K562 (cell line): ENCODE measurements at regions of chr7 and their contacts with region 1.

Region 1: GRCh38 chr7:117750612-117751563 is 122.4 kb downstream of the CTTNBP2 start:
- DNase-seq: peak; percentile 34 to 37 (median 36)
- ATAC-seq: peak; percentile 65; the same call in 1 of the 3 replicates
- H3K4me3 ChIP-seq: no peak overlapping the region
- H3K27ac ChIP-seq: no peak overlapping the region
- H3K4me1 ChIP-seq: no peaks in the 10 kb centered on the region
- H3K27me3 ChIP-seq: no peaks in the 10 kb centered on the region
- CTCF ChIP-seq: peak; percentile 38 to 67 (median 45); a peak in 4 of 6 replicates
- EP300 ChIP-seq: no peak
- POLR2A ChIP-seq: no peak
- RAD21 ChIP-seq: peak; percentile 79 to 83

Region 2: GRCh38 chr7:117791877-117792780 is 41.2 kb after region 1 on chr7:
- CTCF ChIA-PET with region 1: no interaction called
- POLR2A ChIA-PET with region 1: no interaction called
- in situ Hi-C with region 1: no loop called
- intact Hi-C with region 1: loop called (anchors 2 kb)
- DNase-seq: peak; percentile 44 to 90 (median 63)
- ATAC-seq: peak; percentile 91
- H3K4me3 ChIP-seq: peak overlapping the region; percentile 1; the same call in 1 of the 2 replicates
- H3K27ac ChIP-seq: peak overlapping the region; percentile 74
- H3K4me1 ChIP-seq: peaks cover 15 to 35% of the 10 kb centered on the region in 2 experiments; a peak in 4 of 5 replicates
- H3K27me3 ChIP-seq: no peaks in the 10 kb centered on the region
- CTCF ChIP-seq: peak; percentile 59 to 74 (median 59); a peak in 5 of 6 replicates
- EP300 ChIP-seq: peak; percentile 98
- POLR2A ChIP-seq: no peak
- RAD21 ChIP-seq: peak; percentile 33 to 47; a peak in 3 of 4 replicates

Region 3: DNA sequence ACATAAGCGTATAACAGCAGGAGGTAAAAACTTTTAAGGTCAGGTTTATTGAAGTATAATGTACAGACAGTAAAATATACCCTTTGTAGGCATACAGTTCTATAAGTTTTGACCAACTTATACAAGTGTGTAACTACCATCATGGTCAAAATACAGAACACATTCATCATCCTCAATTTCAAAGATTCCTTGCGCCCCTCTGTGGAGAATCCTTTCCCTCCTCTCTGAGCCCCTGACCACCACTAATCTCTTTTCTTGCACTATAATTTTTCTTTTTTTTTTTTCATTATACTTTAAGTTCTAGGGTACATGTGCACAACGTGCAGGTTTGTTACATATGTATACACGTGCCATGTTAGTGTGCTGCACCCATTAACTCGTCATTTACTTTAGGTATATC is 180.4 kb after region 1 on chr7:
- CTCF ChIA-PET with region 1: no interaction called
- POLR2A ChIA-PET with region 1: no interaction called
- in situ Hi-C with region 1: no loop called
- intact Hi-C with region 1: loop called (anchors 5 kb)
- DNase-seq: no peak
- ATAC-seq: peak; percentile 48; the same call in 2 of the 3 replicates
- H3K4me3 ChIP-seq: no peak overlapping the region
- H3K27ac ChIP-seq: no peak overlapping the region
- H3K4me1 ChIP-seq: no peaks in the 10 kb centered on the region
- H3K27me3 ChIP-seq: no peaks in the 10 kb centered on the region
- CTCF ChIP-seq: peak in 1 of 3 experiments; percentile 38; a peak in 2 of 6 replicates
- EP300 ChIP-seq: no peak
- POLR2A ChIP-seq: no peak
- RAD21 ChIP-seq: peak; percentile 14 to 34; a peak in 1 of 4 replicates

Region 4: GRCh38 chr7:118104812-118105441 is 354.0 kb after region 1 on chr7:
- CTCF ChIA-PET with region 1: no interaction called
- POLR2A ChIA-PET with region 1: no interaction called
- in situ Hi-C with region 1: no loop called
- intact Hi-C with region 1: loop called (anchors 10 kb)
- DNase-seq: peak in 2 of 4 experiments; percentile 12 to 13
- ATAC-seq: peak; percentile 73
- H3K4me3 ChIP-seq: no peak overlapping the region
- H3K27ac ChIP-seq: no peak overlapping the region
- H3K4me1 ChIP-seq: no peaks in the 10 kb centered on the region
- H3K27me3 ChIP-seq: no peaks in the 10 kb centered on the region
- CTCF ChIP-seq: peak; percentile 36 to 61 (median 37); a peak in 3 of 6 replicates
- EP300 ChIP-seq: no peak
- POLR2A ChIP-seq: no peak
- RAD21 ChIP-seq: peak; percentile 73 to 81

Region 5: GRCh38 chr7:118153551-118154177 is 402.8 kb after region 1 on chr7:
- CTCF ChIA-PET with region 1: interaction called, 5 read pairs
- POLR2A ChIA-PET with region 1: no interaction called
- in situ Hi-C with region 1: no loop called
- intact Hi-C with region 1: loop called (anchors 1 kb)
- DNase-seq: peak; percentile 57 to 68 (median 58)
- ATAC-seq: peak; percentile 77
- H3K4me3 ChIP-seq: no peak overlapping the region
- H3K27ac ChIP-seq: no peak overlapping the region
- H3K4me1 ChIP-seq: no peaks in the 10 kb centered on the region
- H3K27me3 ChIP-seq: no peaks in the 10 kb centered on the region
- CTCF ChIP-seq: peak; percentile 57 to 83 (median 57); a peak in 5 of 6 replicates
- EP300 ChIP-seq: no peak
- POLR2A ChIP-seq: no peak
- RAD21 ChIP-seq: peak; percentile 93 to 94

Region 6: DNA sequence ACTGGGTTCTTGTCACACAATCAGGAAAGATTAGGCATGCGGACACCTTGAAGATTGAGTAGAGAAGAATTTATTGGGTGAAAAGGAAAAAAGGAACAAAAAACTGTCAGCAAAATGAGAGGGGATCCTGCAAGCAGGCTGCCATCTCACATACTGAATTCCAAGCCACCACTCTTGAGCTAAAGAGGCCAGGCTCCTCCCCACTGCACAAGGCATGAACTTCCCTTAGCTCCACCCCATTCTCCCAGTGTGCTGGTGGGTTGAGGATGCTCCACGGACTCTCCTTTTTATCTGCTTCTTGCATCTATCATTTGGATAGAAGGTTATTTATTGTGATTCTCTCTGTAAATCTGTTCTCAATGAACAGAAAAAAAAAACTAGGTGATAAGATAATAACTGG is 553.2 kb after region 1 on chr7:
- CTCF ChIA-PET with region 1: no interaction called
- POLR2A ChIA-PET with region 1: no interaction called
- in situ Hi-C with region 1: no loop called
- intact Hi-C with region 1: no loop called
- DNase-seq: no peak
- ATAC-seq: no peak
- H3K4me3 ChIP-seq: no peak overlapping the region
- H3K27ac ChIP-seq: no peak overlapping the region
- H3K4me1 ChIP-seq: no peaks in the 10 kb centered on the region
- H3K27me3 ChIP-seq: no peaks in the 10 kb centered on the region
- CTCF ChIP-seq: no peak
- EP300 ChIP-seq: no peak
- POLR2A ChIP-seq: no peak
- RAD21 ChIP-seq: no peak